ENCODE measurements at regions of chr14 and their contacts with region 1.

Region 1: GRCh38 chr14:75293920-75294642 is 15.5 kb downstream of the FOS start:
- DNase-seq: no peak
- H3K4me3 ChIP-seq: peak overlapping the region; percentile 42 to 83 (median 65)
- H3K27ac ChIP-seq: peak overlapping the region; percentile 88 to 99 (median 94)
- H3K4me1 ChIP-seq: peaks cover 27 to 56% (median 41%) of the 10 kb centered on the region in 3 donors
- H3K27me3 ChIP-seq: no peaks in the 10 kb centered on the region
- CTCF ChIP-seq: no peak
- POLR2A ChIP-seq: peak in 2 of 4 donors; percentile 41 to 80

Region 2: DNA sequence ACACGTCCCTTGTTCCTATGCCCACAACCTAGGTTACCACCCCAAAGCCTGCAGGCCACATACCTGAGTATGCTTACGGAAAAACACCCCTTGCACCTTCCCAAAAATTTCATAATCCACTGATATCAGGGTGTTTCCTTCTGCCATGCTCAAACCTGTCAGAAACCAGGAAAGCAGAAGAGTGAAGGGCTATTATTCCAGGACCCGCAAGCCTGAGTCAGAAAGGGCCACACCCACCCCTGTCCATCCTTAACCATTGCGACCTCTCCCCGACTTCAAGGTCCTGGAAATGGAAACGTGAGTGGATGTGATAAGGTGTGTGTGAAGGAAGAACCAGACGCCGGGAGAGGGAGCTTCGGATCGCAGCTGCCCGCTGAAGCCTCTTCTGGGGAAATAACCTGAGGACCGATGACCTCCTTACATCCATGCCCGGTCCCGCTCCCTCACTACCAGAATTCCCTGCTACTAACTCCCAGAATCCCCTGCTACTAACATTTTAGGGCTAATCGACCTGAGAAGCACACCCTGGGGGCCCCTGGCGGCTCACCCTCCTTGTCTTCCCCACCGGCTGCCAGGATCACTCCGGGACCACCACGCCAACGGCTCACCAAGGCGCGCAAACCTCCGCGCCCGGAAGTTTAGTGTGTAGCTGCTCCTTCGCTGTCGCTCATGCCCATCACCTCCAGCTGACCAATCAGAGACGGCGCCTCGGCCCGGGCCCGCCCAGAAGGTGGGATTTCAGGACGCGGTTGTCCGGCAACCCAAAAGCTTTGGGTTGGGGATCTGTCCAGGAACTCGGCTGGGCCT is 230.5 kb before region 1 on chr14 and contains the start of gene ACYP1:
- intact Hi-C with region 1: no loop called
- DNase-seq: peak; percentile 57
- H3K4me3 ChIP-seq: peak within 1 kb of the TSS; percentile 81 to 87 (median 84)
- H3K27ac ChIP-seq: peak within 1 kb of the TSS; percentile 86 to 92 (median 90)
- H3K4me1 ChIP-seq: peaks cover 18 to 40% (median 19%) of the 10 kb centered on the region in 3 donors
- H3K27me3 ChIP-seq: no peaks in the 10 kb centered on the region
- CTCF ChIP-seq: peak in 1 of 6 experiments; percentile 6
- POLR2A ChIP-seq: peak in 1 of 4 donors; percentile 26
- total RNA-seq, gene ACYP1: 11.0 to 28.0 (median 15.4) TPM

Region 3: GRCh38 chr14:75132382-75133086 is 161.5 kb before region 1 on chr14:
- intact Hi-C with region 1: loop called (anchors 5 kb)
- DNase-seq: no peak
- H3K4me3 ChIP-seq: no peak overlapping the region
- H3K27ac ChIP-seq: peak overlapping the region; percentile 5 to 59 (median 48)
- H3K4me1 ChIP-seq: peaks cover 0 to 34% (median 13%) of the 10 kb centered on the region in 3 donors
- H3K27me3 ChIP-seq: no peaks in the 10 kb centered on the region
- CTCF ChIP-seq: peak; percentile 64 to 89 (median 86)
- POLR2A ChIP-seq: no peak

Region 4: GRCh38 chr14:75249251-75249957 is 44.7 kb before region 1 on chr14:
- intact Hi-C with region 1: loop called (anchors 10 kb)
- DNase-seq: no peak
- H3K4me3 ChIP-seq: no peak overlapping the region
- H3K27ac ChIP-seq: peak overlapping the region in 2 of 4 donors; percentile 13 to 55
- H3K4me1 ChIP-seq: peaks cover 26 to 69% (median 33%) of the 10 kb centered on the region in 3 donors
- H3K27me3 ChIP-seq: no peaks in the 10 kb centered on the region
- CTCF ChIP-seq: peak in 1 of 6 experiments; percentile 3
- POLR2A ChIP-seq: no peak

Measured in esophagus squamous epithelium (tissue), 5 donors.